AG04450 (cell line): ENCODE measurements at regions of chr2 and their contacts with region 1.

Region 1: GRCh38 chr2:42127425-42128424 is 41.4 kb upstream of the EML4 start:
- DNase-seq: no peak
- H3K4me3 ChIP-seq: no peak overlapping the region
- H3K27ac ChIP-seq: no peak overlapping the region
- H3K27me3 ChIP-seq: no peaks in the 10 kb centered on the region
- CTCF ChIP-seq: no peak

Region 2: DNA sequence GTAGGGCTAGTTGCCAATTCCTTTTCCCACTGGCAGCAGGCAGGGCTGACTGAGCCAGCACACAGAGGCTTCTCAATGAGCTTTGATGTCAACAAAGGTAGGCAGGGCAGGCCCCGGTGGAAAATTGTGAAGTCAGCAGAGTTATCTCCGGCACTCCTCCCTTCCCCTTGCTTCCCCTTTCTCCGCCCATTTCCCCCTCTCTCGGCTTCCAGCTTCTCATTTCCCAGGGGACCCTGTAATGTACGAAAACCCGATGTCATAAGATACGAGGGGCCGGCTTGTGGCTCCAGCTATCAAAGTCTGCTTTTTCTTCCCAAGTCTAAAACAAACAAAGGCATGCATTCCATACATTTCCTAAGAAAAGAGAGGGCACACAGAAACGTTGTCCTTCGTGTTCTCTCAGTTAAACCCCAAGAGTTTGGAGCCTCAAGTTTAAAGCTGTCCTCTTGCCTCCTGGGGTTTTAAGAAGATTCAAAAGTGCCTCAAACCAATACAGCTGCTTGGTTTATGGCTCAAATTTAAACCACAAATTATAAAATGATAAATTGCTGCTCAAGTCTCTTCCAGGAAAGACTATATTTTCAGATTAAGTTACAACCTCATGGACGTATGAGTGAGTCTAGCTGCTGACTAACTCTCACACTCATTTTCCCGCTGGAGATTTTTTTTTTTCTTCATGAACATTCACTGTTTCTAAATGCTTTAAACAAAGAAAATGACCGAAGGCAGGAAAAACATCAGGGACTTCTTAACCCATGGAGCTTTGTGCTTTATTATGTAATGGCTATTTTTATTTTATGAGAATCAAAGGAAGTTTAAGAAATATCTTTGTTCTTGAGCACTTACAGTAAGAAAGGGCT is 14.2 kb after region 1 on chr2:
- CTCF ChIA-PET with region 1: interaction called, 4 read pairs
- POLR2A ChIA-PET with region 1: interaction called, 31 read pairs
- DNase-seq: peak; percentile 77
- H3K4me3 ChIP-seq: peak overlapping the region; percentile 47
- H3K27ac ChIP-seq: peak overlapping the region; percentile 98
- H3K27me3 ChIP-seq: no peaks in the 10 kb centered on the region
- CTCF ChIP-seq: no peak